T-cell (primary cell): ENCODE measurements at regions of chr2 and their contacts with region 1.

Region 1: GRCh38 chr2:230411570-230412370 is 4.2 kb upstream of the SP100 start:
- DNase-seq: peak in 34 of 35 experiments; percentile 21 to 78 (median 43)
- ATAC-seq: peak; percentile 70 to 78 (median 74)
- H3K4me3 ChIP-seq: peak overlapping the region; percentile 69 to 78
- H3K4me3 Mint-ChIP-seq: peak overlapping the region; percentile 91 to 99 (median 98)
- H3K27ac ChIP-seq: peak overlapping the region; percentile 86
- H3K27ac Mint-ChIP-seq: peak overlapping the region; percentile 99 to 100
- H3K4me1 ChIP-seq: peaks cover 3 to 59% of the 10 kb centered on the region in 2 experiments
- H3K4me1 Mint-ChIP-seq: peaks cover 76 to 90% (median 77%) of the 10 kb centered on the region in 3 donors
- H3K27me3 ChIP-seq: no peaks in the 10 kb centered on the region
- H3K27me3 Mint-ChIP-seq: no peaks in the 10 kb centered on the region

Region 2: DNA sequence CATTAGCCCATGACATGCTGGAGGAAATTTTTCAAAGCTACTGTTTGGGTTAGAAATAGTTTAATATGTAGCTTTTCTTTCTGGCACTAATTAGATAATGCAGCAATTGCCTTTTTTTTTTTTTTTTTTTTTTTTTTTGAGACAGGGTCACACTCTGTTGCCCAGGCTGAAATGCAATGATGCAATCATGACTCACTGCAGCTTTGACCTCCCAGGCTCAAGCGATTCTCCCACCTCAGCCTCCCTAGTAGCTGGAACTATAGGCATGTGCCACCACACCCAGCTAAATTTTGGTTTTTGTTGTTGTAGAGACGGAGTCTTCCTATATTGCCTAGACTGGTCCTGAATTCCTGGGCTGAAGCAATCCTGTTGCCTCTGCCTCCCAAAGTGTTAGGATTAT is 140.4 kb after region 1 on chr2:
- CTCF ChIA-PET with region 1: no interaction called
- POLR2A ChIA-PET with region 1: interaction called in 1 of 2 experiments, 13 read pairs
- DNase-seq: no peak
- ATAC-seq: no peak
- H3K4me3 ChIP-seq: no peak overlapping the region
- H3K4me3 Mint-ChIP-seq: no peak overlapping the region
- H3K27ac ChIP-seq: no peak overlapping the region
- H3K27ac Mint-ChIP-seq: no peak overlapping the region
- H3K4me1 ChIP-seq: peaks cover 0 to 3% of the 10 kb centered on the region in 2 experiments
- H3K4me1 Mint-ChIP-seq: peaks cover 10 to 13% (median 11%) of the 10 kb centered on the region in 3 donors
- H3K27me3 ChIP-seq: no peaks in the 10 kb centered on the region
- H3K27me3 Mint-ChIP-seq: no peaks in the 10 kb centered on the region